ENCODE measurements at regions of chr4 and their contacts with region 1.

Region 1: GRCh38 chr4:40736910-40737309 is 12.8 kb upstream of the NSUN7 start:
- DNase-seq: no peak
- ATAC-seq: no peak
- H3K4me3 ChIP-seq: no peak overlapping the region
- H3K27ac ChIP-seq: no peak overlapping the region
- H3K4me1 ChIP-seq: no peaks in the 10 kb centered on the region
- H3K27me3 ChIP-seq: no peaks in the 10 kb centered on the region

Region 2: DNA sequence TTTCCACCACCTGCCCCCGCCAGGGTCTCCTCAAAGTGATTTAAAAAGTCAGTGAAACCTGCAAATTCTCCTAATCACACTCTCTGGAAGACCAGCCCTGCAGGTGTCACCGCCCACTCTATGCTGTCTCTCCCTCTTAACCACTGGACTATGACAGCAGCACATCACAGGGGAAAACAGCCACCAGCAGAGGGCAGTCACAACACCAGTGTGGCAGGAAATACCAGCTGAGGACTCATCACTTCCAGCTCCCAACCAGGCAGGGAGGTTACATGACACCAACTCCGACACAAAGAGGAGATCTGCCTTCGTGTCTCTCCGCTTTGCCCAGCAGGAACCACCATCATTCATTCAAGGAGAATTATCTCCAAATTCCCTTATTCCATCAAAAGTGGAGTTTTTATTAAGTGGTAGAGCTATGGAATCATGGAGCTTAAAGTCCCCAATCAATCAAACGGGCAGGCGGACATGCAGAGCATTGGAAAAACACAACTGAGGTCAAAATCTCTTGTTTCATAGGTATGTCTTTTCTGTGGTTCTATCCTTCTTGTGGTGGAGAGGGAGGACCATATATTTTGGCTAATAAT is 104.2 kb after region 1 on chr4:
- intact Hi-C with region 1: loop called in 1 of 4 experiments (anchors 10 kb)
- DNase-seq: peak; percentile 75 to 91 (median 86)
- ATAC-seq: peak; percentile 50 to 81
- H3K4me3 ChIP-seq: no peak overlapping the region
- H3K27ac ChIP-seq: no peak overlapping the region
- H3K4me1 ChIP-seq: peaks cover 14% of the 10 kb centered on the region
- H3K27me3 ChIP-seq: no peaks in the 10 kb centered on the region

Region 3: GRCh38 chr4:40897557-40898203 is 160.8 kb after region 1 on chr4:
- intact Hi-C with region 1: loop called in 1 of 4 experiments (anchors 5 kb)
- DNase-seq: peak; percentile 72 to 85 (median 83)
- ATAC-seq: peak; percentile 61 to 77
- H3K4me3 ChIP-seq: no peak overlapping the region
- H3K27ac ChIP-seq: no peak overlapping the region
- H3K4me1 ChIP-seq: no peaks in the 10 kb centered on the region
- H3K27me3 ChIP-seq: no peaks in the 10 kb centered on the region

Region 4: GRCh38 chr4:40924096-40924792 is 187.3 kb after region 1 on chr4:
- intact Hi-C with region 1: loop called in 1 of 4 experiments (anchors 10 kb)
- DNase-seq: peak; percentile 59 to 85 (median 84)
- ATAC-seq: peak; percentile 57 to 66
- H3K4me3 ChIP-seq: no peak overlapping the region
- H3K27ac ChIP-seq: peak overlapping the region; percentile 13
- H3K4me1 ChIP-seq: peaks cover 5% of the 10 kb centered on the region
- H3K27me3 ChIP-seq: no peaks in the 10 kb centered on the region

Region 5: DNA sequence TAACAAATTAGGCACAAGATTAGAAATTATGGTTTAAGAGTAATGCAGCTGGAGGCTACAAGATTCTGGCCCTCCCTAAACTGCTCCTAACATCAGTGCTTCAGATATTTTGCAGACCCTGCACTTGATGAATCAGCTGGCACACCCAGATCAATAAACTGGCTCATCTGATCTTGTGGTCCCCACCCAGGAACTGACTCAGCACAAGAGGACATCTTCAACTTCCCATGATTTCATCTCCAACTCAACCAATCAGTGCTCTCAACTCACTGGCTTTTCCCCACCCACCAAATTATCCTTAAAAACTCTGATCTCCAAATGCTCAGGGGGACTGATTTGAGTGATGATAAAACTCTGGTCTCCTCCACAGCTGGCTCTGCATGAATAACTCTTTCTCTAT is 1176.6 kb after region 1 on chr4:
- intact Hi-C with region 1: no loop called
- DNase-seq: no peak
- ATAC-seq: no peak
- H3K4me3 ChIP-seq: no peak overlapping the region
- H3K27ac ChIP-seq: no peak overlapping the region
- H3K4me1 ChIP-seq: no peaks in the 10 kb centered on the region
- H3K27me3 ChIP-seq: no peaks in the 10 kb centered on the region

Measured in right cardiac atrium (tissue), 5 donors.